ENCODE measurements at regions of chr2 and their contacts with region 1.

Region 1: DNA sequence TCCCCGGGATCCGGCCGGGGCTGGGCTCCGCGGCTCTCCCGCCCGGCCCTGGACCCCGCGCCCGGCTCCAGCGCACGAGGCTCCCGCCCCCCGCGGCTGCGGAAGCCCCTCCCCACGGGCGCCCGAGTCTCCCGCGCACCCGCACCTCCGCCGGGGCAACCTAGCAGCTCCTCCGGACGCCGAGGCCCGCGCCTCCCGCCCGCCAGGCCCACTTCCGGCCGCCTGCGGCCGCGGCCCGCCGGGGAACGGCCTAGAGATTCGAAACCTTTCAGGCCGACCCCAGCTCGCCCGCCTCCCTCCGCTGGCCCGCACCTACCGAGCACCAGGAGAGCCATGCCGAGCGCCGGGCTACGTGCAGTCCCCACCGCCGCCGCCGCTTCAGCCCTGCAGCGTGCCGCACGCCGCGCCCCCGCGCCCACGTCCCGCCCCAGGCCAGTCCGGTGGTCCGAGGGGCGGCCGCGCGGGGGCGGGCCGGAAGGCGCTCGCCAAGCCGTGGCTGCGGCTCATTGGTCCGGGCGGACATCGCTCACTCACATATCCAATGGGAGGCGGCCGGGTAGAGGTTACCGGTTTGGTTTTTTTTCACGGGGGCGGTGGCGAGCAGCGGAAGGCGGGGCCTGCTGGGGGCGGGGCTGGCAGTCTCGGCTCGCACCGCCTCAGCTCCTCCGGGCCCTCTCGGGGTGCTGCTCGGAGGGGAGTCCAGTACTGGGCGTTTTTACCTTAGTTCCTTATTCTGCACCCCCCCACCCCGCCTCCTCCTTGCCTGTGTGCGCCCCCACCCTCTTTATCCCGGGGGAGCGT is at the start of gene PDIA6:
- DNase-seq: peak; percentile 97
- ATAC-seq: peak; percentile 86
- H3K4me3 Mint-ChIP-seq: peak within 1 kb of the TSS; percentile 91
- H3K27ac Mint-ChIP-seq: peak within 1 kb of the TSS; percentile 95
- H3K4me1 Mint-ChIP-seq: peaks cover 41% of the 10 kb centered on the region
- H3K27me3 Mint-ChIP-seq: no peaks in the 10 kb centered on the region
- CTCF ChIP-seq: no peak
- total RNA-seq, gene PDIA6: 109 and 119 TPM in 2 replicates

Region 2: DNA sequence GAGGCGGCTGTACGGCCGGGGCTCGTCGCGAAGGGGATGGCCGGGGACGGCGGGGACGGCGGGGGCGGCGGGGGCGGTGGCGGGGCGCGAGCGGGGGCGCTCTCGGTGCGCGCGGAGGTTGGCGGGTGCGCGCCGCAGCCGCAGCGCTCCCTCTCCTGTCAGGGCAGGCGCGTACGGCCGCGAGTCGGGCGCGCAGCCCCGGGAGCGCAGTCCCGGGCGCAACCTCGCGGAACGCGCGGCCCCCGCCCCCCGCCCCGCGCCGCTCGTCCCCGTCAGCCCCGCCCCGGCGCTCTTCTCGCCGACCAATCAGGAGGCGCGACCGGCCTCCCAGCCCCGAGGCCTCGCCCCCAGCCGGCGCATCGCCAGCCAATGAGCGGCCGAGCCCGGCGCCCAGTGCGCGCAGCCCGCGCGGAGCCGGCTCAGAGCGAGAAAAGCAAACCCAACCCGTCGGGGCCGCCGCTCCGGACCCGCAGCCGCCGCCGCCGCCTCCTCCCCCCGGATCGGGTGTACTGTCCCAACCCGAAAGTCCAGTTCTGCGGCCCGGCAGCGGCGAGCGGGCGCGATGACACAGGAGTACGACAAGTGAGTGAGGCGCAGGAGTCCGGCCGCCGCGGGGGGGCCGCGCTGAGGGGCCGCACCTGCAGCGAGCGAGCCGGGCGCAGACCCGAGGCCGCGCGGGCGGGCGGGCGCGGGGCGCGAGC is 861.1 kb before region 1 on chr2 and contains the start of gene GRHL1:
- CTCF ChIA-PET with region 1: no interaction called
- POLR2A ChIA-PET with region 1: no interaction called
- intact Hi-C with region 1: loop called (anchors 2 kb)
- DNase-seq: peak; percentile 89
- ATAC-seq: peak; percentile 96
- H3K4me3 Mint-ChIP-seq: peak within 1 kb of the TSS; percentile 84
- H3K27ac Mint-ChIP-seq: peak within 1 kb of the TSS; percentile 65
- H3K4me1 Mint-ChIP-seq: peaks cover 14% of the 10 kb centered on the region
- H3K27me3 Mint-ChIP-seq: peaks cover 37% of the 10 kb centered on the region
- CTCF ChIP-seq: no peak
- total RNA-seq, gene GRHL1: 0.39 and 0.95 TPM in 2 replicates

Region 3: GRCh38 chr2:9984217-9984739 is 828.3 kb before region 1 on chr2:
- CTCF ChIA-PET with region 1: no interaction called
- POLR2A ChIA-PET with region 1: no interaction called
- intact Hi-C with region 1: no loop called
- DNase-seq: no peak
- ATAC-seq: peak; percentile 86
- H3K4me3 Mint-ChIP-seq: no peak overlapping the region
- H3K27ac Mint-ChIP-seq: no peak overlapping the region
- H3K4me1 Mint-ChIP-seq: peaks cover 6% of the 10 kb centered on the region
- H3K27me3 Mint-ChIP-seq: peaks cover 16% of the 10 kb centered on the region
- CTCF ChIP-seq: no peak

Region 4: DNA sequence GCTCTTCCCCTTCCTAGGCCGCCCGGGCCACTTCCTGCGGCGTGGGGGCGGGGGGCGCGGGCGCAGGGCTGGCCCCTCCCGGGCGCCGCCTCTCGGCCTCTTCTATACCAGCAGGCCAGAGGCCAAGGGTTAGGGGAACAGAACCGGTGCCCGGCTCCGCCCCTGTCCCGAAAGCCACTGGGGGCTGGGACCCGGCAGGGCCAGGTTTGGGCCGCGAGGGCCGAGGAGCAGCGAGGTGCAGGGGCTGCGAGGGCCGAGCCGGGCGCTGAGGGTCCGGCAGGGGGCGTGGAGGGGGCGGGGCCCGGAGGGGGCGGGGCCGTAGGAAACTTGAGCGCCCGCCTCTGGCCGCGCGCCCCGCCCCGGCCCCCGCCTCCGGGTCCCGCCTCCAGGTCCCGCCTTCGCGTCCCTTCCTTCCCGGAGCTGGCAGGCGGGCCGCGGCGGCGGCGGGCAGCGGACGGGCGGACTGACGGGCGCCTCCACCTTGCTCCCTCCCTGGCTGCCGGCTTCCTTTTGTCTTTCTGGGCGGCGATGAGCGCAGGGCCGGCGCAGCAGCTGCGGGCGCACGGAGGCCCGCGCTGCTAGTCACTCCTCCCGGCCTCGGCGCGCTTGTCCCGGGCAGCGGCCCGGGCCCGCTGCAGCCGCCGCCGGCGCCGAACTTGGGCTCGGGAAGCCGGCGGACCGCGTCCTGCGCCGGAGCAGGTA is 509.9 kb before region 1 on chr2 and contains the start of gene HPCAL1:
- CTCF ChIA-PET with region 1: no interaction called
- POLR2A ChIA-PET with region 1: no interaction called
- intact Hi-C with region 1: loop called (anchors 10 kb)
- DNase-seq: peak; percentile 87
- ATAC-seq: peak; percentile 84
- H3K4me3 Mint-ChIP-seq: peak within 1 kb of the TSS; percentile 96
- H3K27ac Mint-ChIP-seq: peak within 1 kb of the TSS; percentile 80
- H3K4me1 Mint-ChIP-seq: peaks cover 58% of the 10 kb centered on the region
- H3K27me3 Mint-ChIP-seq: no peaks in the 10 kb centered on the region
- CTCF ChIP-seq: no peak
- total RNA-seq, gene HPCAL1: 15.2 and 15.9 TPM in 2 replicates

Region 5: DNA sequence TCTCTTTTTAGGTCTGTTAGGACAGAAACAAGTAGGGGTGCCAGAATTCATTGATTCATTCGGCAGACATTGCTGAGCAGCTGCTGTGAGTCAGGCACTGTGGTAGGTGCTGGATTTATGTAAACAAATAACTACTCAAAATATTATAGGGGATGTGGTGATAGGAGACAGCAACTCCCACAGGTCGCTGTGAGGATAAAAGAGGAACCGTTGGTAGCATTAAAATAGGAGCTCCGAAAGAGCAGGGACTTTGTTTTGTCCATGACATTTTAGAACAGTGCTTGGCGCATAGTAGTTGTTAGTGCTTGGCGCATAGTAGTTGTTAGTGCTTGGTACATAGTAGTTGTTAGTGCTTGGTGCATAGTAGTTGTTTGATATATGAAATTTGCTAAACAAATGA is 62.0 kb before region 1 on chr2:
- CTCF ChIA-PET with region 1: no interaction called
- POLR2A ChIA-PET with region 1: interaction called, 4 read pairs
- intact Hi-C with region 1: loop called (anchors 1 kb)
- DNase-seq: no peak
- ATAC-seq: no peak
- H3K4me3 Mint-ChIP-seq: no peak overlapping the region
- H3K27ac Mint-ChIP-seq: no peak overlapping the region
- H3K4me1 Mint-ChIP-seq: peaks cover 18% of the 10 kb centered on the region
- H3K27me3 Mint-ChIP-seq: no peaks in the 10 kb centered on the region
- CTCF ChIP-seq: no peak

Region 6: GRCh38 chr2:11344342-11344955 is 531.9 kb after region 1 on chr2 and contains the start of gene ROCK2:
- CTCF ChIA-PET with region 1: no interaction called
- POLR2A ChIA-PET with region 1: interaction called, 3 read pairs
- intact Hi-C with region 1: loop called (anchors 2 kb)
- DNase-seq: peak; percentile 73
- ATAC-seq: peak; percentile 67
- H3K4me3 Mint-ChIP-seq: peak within 1 kb of the TSS; percentile 99
- H3K27ac Mint-ChIP-seq: peak within 1 kb of the TSS; percentile 86
- H3K4me1 Mint-ChIP-seq: peaks cover 29% of the 10 kb centered on the region
- H3K27me3 Mint-ChIP-seq: no peaks in the 10 kb centered on the region
- CTCF ChIP-seq: no peak
- total RNA-seq, gene ROCK2: 18.5 and 18.8 TPM in 2 replicates

Region 7: DNA sequence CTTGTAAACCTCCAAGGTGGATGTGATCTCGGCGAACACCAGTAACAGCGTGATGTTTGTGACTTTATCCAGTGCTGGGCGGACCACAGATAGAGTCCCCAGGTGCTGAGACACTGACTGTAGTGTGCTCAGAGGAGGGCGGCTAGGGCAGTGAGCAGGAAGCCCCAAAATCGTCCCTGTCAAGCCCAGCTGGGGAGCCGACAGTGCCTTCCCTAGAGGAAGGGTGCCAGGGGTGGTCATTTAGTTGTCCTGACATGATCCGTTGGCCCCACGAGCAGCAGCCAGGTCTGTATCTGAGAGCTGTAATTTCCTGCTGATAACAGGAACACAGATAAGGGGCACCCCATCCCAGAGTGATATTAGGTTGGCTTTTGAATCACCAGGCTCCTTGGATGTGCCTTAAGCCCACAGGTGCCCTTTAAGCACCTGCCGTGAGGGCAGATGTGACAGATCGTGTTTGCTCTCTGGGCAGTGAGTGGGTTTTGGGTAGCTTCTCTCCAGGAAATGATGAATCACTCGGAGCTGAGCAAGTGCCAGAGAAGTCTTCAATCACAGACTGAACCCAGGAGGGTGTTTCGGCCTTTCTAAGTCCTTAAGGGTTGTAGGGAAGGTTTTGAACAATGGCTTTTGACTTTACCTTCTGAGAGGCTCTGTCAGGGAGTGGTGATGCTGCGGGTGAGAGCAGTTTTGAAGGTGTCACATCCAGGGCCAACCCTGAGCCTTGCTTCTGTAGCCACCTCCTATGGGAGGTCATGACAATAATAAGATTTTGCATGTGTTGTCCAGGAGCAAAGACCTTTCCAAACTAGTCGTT is 941.5 kb after region 1 on chr2:
- CTCF ChIA-PET with region 1: no interaction called
- POLR2A ChIA-PET with region 1: interaction called, 3 read pairs
- intact Hi-C with region 1: loop called (anchors 2 kb)
- DNase-seq: peak; percentile 43
- ATAC-seq: peak; percentile 54
- H3K4me3 Mint-ChIP-seq: peak overlapping the region; percentile 82
- H3K27ac Mint-ChIP-seq: peak overlapping the region; percentile 96
- H3K4me1 Mint-ChIP-seq: peaks cover 90% of the 10 kb centered on the region
- H3K27me3 Mint-ChIP-seq: no peaks in the 10 kb centered on the region
- CTCF ChIP-seq: no peak